HepG2 (cell line): ENCODE measurements at regions of chr3 and their contacts with region 1.

Region 1: DNA sequence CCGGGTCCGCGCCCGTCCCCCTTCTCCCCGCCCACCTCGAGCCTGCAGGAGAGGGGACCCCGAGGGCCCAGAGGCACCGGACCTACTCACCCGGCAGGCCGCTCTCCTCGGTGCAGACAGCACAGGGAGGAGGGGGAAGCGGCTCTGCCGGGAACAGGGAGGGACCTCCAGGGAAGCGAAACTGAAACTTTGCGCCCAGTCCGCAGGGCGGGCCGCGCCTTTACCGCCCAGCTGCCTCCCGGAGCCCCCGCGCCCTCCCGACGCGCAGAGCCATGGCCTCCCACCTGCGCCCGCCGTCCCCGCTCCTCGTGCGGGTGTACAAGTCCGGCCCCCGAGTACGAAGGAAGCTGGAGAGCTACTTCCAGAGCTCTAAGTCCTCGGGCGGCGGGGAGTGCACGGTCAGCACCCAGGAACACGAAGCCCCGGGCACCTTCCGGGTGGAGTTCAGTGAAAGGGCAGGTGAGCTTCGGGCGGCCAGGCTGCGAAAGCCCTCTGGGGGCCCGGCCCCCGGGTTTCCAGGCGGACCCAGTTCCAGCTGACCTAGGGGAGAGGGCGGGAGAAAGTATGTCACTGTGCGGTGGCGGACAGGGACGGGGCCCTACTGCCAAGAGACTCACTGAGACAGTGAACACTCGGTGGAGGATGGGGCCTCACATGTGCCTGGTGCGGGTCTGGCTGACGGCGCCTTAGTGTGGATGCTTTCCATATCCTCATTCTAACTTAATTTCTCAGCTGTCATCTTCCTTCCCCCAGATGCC is at the starts of genes DTX3L and PARP9:
- DNase-seq: peak; percentile 64
- ATAC-seq: peak; percentile 99
- H3K4me3 ChIP-seq: peak within 1 kb of the TSS; percentile 78 to 82 (median 81)
- H3K27ac ChIP-seq: peak within 1 kb of the TSS; percentile 78
- H3K4me1 ChIP-seq: peaks cover 16% of the 10 kb centered on the region
- H3K27me3 ChIP-seq: no peaks in the 10 kb centered on the region
- CTCF ChIP-seq: peak; percentile 19; the same call in 1 of the 2 replicates
- EP300 ChIP-seq: no peak
- POLR2A ChIP-seq: peak; percentile 54 to 70; a peak in 3 of 4 replicates
- RAD21 ChIP-seq: peak; percentile 31; the same call in 1 of the 2 replicates
- total RNA-seq, gene DTX3L: 10.9 and 19.2 TPM in 2 replicates
- total RNA-seq, gene PARP9: 10.6 and 12.5 TPM in 2 replicates

Region 2: GRCh38 chr3:122646146-122646988 is 82.0 kb after region 1 on chr3:
- CTCF ChIA-PET with region 1: no interaction called
- POLR2A ChIA-PET with region 1: interaction called, 12 read pairs
- in situ Hi-C with region 1: no loop called
- intact Hi-C with region 1: loop called (anchors 2 kb)
- DNase-seq: no peak
- ATAC-seq: no peak
- H3K4me3 ChIP-seq: no peak overlapping the region
- H3K27ac ChIP-seq: no peak overlapping the region
- H3K4me1 ChIP-seq: peaks cover 7% of the 10 kb centered on the region
- H3K27me3 ChIP-seq: peaks cover 4 to 50% of the 10 kb centered on the region in 2 experiments; a peak in 4 of 5 replicates
- CTCF ChIP-seq: no peak
- EP300 ChIP-seq: no peak
- POLR2A ChIP-seq: no peak
- RAD21 ChIP-seq: no peak

Region 3: DNA sequence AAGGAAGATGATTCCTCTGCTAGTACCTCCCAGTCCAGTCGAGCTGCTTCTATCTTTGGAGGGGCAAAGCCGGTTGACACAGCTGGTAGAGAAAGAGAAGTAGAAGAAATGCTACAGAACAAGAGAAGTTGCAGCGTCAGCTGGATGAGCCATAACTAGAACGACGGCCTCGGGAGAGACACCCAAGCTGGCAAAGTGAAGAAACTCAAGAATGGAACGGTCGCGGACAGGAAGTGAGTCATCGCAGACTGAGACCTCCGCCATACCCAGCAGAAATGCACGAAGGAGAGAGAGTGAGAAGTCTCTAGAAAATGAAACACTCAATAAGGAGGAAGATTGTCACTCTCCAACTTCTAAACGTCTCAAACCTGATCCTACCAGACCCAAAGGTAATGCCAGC is 97.3 kb after region 1 on chr3:
- CTCF ChIA-PET with region 1: interaction called, 6 read pairs
- POLR2A ChIA-PET with region 1: no interaction called
- in situ Hi-C with region 1: no loop called
- intact Hi-C with region 1: loop called (anchors 1 kb)
- DNase-seq: no peak
- ATAC-seq: no peak
- H3K4me3 ChIP-seq: no peak overlapping the region
- H3K27ac ChIP-seq: no peak overlapping the region
- H3K4me1 ChIP-seq: no peaks in the 10 kb centered on the region
- H3K27me3 ChIP-seq: peaks cover 0 to 21% of the 10 kb centered on the region in 2 experiments; a peak in 2 of 5 replicates
- CTCF ChIP-seq: no peak
- EP300 ChIP-seq: no peak
- POLR2A ChIP-seq: no peak
- RAD21 ChIP-seq: no peak